Activated T-helper 1 cell treated with anti-CD3 and anti-CD28 coated beads, Interleukin-12 subunit alpha, Interleukin-12 subunit beta, Interleukin-2, Interleukin-4 antibody, amounts not matched to agents 30 ng/mL and 10 ng/mL and 1 ng/mL, durations not matched to agents 14 hours and 24 hours and 36 hours (primary cell): ENCODE measurements at regions of chr19 and their contacts with region 1.

Region 1: GRCh38 chr19:13731147-13731964 is 33.0 kb upstream of the MRI1 start:
- DNase-seq: peak; percentile 93
- H3K4me3 Mint-ChIP-seq: peak overlapping the region; percentile 90
- H3K27ac Mint-ChIP-seq: peak overlapping the region; percentile 96
- H3K4me1 Mint-ChIP-seq: peaks cover 19% of the 10 kb centered on the region
- H3K27me3 Mint-ChIP-seq: no peaks in the 10 kb centered on the region

Region 2: DNA sequence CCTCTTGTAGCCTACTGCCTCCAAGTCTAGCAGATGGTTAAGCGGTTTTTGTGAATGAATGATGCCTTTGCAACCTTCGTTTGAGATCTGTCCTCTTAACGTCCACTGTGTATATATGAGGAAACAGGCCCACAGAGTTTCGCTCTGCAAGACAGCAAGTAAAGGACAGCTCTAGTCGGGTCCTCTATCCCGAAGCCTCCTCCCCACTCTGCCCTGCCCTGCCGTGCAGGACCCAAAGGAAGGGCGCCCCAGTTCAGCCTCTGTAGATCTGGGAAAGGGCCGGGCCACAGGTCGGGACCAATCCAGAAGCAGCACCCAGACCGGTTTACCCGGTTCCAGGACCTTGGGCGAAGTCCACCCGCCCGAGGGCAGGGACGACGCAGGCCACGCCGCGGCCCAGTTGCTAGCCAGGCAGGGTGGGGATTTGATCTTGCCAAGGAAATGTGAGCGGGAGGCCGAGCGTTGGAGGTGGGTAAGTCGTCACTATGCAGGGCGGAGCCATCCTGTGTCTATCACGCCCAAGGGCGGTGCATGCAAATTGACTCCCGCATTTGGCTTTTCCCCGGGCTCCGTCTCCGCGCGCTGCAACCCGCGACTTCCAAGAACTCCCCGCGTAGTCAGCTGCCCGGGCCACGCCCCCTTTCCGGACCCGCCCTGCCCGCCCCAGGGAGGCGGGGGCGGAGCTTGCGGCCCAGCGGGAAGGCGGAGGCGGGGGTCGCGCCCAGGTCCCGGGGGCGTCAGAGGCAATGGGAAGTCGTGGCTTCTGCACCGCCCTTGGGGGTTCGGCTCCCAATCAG is 568.6 kb before region 1 on chr19:
- intact Hi-C with region 1: loop called (anchors 5 kb)
- DNase-seq: peak; percentile 90
- H3K4me3 Mint-ChIP-seq: peak overlapping the region; percentile 82
- H3K27ac Mint-ChIP-seq: peak overlapping the region; percentile 94
- H3K4me1 Mint-ChIP-seq: peaks cover 51% of the 10 kb centered on the region
- H3K27me3 Mint-ChIP-seq: no peaks in the 10 kb centered on the region

Region 3: DNA sequence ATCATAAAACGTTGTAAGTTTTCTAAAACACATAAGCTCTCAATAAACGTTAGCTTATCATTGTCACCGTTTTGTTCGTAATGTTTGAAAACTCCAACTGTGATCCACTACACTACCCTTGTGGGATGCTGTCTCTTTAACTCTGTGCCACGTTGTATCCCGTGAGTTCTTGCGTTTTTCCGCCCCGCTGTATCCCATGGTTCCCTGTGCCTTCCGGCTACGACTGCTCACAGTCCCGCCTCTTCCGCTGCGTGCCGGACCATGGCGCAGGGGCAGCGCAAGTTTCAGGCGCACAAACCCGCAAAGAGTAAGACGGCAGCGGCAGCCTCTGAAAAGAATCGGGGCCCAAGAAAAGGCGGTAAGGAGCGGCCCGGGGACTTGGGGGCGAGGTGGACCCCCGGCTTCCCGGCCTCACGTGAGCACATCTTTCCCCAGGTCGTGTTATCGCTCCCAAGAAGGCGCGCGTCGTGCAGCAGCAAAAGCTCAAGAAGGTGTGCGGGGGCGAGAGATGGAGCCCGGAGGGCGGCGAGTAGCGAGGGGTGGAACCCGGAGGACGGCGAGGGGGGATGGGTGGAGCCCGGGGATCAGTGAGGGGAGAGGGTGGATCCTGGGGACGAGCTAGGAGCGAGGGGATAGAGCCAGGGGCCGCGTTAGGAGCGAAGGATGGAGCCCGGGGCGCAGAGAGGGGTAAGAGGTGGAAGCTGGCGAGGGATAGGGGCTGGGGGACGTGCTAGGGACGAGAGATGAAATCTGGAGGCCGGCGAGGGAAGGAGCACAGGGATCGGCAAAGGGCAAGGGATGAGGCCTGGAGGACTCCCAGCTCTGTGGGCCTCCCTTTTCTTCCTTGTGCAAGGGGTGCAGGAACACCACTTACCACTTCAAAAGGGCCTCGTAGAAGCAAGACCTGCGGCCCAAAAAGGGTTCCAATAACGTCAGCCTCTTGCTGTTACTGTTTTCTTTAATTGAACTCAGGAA is 43.1 kb after region 1 on chr19 and contains the start of gene C19orf53:
- intact Hi-C with region 1: loop called (anchors 1 kb)
- DNase-seq: peak; percentile 87
- H3K4me3 Mint-ChIP-seq: peak within 1 kb of the TSS; percentile 100
- H3K27ac Mint-ChIP-seq: peak within 1 kb of the TSS; percentile 99
- H3K4me1 Mint-ChIP-seq: peaks cover 25% of the 10 kb centered on the region
- H3K27me3 Mint-ChIP-seq: no peaks in the 10 kb centered on the region
- total RNA-seq, gene C19orf53: 158 and 162 TPM in 2 replicates

Region 4: DNA sequence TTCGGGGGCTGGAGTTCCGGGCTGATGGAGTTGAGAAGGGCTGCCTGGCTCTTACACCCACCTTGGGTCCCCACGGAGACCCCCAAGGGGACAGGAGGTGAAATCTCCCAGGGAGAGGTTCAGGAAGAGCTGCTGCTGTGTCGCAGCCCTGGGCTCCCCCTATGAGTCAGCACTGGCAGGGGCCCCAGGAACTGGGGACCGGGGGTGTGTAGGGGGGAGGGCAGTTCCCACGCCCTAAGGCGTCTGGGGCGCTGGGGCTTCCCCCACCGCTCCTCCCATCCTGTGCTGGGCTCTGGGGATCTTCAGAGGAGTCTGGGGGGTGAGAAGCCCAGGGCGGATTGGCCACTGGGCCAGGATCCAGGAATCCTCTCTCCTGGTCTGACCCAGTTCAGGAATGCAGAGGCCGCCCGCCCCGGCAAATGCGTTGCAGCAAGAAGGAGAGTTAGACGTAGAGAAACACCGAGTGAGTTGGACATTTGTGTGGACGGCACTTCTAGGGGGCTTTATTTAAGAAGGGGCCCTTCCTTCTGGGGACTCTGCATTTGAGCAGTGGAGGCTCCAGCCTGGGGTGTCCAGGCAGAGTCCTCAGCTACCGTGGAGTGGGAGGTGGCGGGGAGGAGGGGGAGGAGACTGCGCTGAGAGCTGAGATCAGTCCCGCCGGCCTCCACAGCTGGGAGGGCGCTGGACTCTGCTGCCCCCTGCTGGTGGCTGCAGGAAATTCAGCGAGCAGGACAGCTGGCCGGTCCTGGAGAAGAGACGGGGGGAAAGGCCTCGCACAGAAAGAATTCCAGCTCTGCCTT is 130.6 kb after region 1 on chr19:
- intact Hi-C with region 1: loop called (anchors 5 kb)
- DNase-seq: peak; percentile 82
- H3K4me3 Mint-ChIP-seq: peak overlapping the region; percentile 96
- H3K27ac Mint-ChIP-seq: peak overlapping the region; percentile 98
- H3K4me1 Mint-ChIP-seq: peaks cover 49% of the 10 kb centered on the region
- H3K27me3 Mint-ChIP-seq: peaks cover 22% of the 10 kb centered on the region

Region 5: GRCh38 chr19:14689598-14690503 is 958.5 kb after region 1 on chr19 and contains the start of gene ZNF333:
- intact Hi-C with region 1: loop called (anchors 5 kb)
- DNase-seq: peak; percentile 94
- H3K4me3 Mint-ChIP-seq: peak within 1 kb of the TSS; percentile 93
- H3K27ac Mint-ChIP-seq: peak within 1 kb of the TSS; percentile 99
- H3K4me1 Mint-ChIP-seq: peaks cover 16% of the 10 kb centered on the region
- H3K27me3 Mint-ChIP-seq: peaks cover 3% of the 10 kb centered on the region
- total RNA-seq, gene ZNF333: 10.0 and 11.1 TPM in 2 replicates